Activated T-helper 2 cell treated with anti-CD3 and anti-CD28 coated beads, Interferon-gamma antibody, Interleukin-2, Interleukin-4, amounts not matched to agents 10 μg/mL and 5 μg/mL and 100 μg/mL, durations not matched to agents 14 hours and 24 hours and 36 hours (primary cell): ENCODE measurements at regions of chr22 and their contacts with region 1.

Region 1: DNA sequence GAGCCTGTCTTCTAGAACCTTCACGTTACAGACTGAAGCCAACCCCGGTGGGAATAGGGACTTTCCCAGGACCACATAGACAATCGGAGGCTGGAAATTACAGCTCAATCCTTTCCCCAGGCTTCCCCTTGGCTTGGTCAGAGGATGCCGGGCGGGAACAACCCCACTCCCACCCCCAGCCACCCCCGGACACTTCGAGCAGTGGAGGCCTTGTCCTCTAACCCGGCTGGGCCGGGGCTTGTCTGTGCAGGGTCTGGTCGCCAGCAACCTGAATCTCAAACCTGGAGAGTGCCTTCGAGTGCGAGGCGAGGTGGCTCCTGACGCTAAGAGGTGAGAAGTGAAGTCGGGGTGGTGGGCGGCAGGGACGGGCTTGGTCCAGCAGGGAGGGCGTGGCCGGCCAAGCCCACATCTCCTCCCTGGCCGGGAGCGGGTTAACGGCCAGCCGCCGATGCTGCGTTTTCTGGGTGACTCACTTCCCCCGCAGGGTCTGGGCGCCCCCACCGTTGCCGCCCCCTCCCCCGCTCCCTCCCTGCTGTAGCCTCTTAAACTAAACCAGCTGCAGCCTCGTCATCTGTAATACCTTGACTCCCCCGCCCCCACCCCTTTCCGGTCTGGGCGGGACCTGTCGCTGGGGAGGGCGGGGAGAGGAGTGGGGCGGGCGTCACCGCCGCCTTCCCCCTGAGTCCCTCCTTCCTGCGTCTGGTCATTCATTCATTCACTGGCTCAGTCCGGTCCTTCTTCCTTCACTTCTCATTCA is 1.5 kb downstream of the LGALS1 start:
- DNase-seq: peak; percentile 90
- H3K4me3 Mint-ChIP-seq: peak overlapping the region; percentile 95
- H3K27ac Mint-ChIP-seq: peak overlapping the region; percentile 97
- H3K4me1 Mint-ChIP-seq: peaks cover 45% of the 10 kb centered on the region
- H3K27me3 Mint-ChIP-seq: no peaks in the 10 kb centered on the region

Region 2: DNA sequence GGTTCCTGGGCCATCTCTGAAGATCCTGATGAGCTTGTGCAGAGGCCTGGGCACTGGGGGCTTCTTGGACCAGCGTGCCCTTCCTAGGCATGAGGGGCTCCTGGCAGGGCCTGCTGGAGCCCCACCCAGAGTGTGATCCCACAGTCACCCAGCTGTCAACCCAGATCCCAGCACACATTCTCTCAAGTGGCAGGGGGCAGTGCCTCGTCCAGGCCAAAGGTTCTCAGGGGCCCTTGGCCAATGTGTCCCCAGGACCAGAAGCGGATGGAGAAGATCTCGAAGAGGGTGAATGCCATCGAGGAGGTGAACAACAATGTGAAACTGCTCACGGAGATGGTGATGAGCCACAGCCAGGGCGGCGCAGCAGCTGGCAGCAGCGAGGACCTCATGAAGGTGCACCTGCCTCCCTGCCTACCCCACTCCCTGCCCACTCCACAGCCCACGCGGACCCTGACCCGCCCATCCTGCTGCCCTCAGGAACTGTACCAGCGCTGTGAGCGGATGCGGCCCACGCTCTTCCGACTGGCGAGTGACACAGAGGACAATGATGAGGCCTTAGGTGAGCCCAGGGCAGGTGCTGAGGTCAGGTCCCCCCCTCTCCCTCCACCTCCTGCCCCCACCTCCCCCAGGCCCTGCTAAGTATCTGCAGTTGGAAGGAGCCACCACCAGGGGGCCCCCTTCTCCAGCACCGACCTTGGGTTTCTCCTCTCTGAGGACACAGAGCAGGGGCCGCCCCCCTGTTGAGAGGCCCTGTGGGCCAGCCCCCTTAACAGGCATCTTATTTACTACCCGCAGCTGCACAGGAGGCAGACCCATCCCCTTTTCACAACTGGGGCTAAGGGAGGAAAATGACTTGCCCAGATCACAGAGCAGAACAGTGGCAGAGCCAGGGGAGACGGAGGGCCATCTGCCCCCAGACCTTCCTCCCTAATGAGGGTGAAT is 53.6 kb before region 1 on chr22:
- intact Hi-C with region 1: loop called (anchors 1 kb)
- DNase-seq: peak; percentile 67
- H3K4me3 Mint-ChIP-seq: no peak overlapping the region
- H3K27ac Mint-ChIP-seq: peak overlapping the region; percentile 70
- H3K4me1 Mint-ChIP-seq: peaks cover 20% of the 10 kb centered on the region
- H3K27me3 Mint-ChIP-seq: no peaks in the 10 kb centered on the region

Region 3: DNA sequence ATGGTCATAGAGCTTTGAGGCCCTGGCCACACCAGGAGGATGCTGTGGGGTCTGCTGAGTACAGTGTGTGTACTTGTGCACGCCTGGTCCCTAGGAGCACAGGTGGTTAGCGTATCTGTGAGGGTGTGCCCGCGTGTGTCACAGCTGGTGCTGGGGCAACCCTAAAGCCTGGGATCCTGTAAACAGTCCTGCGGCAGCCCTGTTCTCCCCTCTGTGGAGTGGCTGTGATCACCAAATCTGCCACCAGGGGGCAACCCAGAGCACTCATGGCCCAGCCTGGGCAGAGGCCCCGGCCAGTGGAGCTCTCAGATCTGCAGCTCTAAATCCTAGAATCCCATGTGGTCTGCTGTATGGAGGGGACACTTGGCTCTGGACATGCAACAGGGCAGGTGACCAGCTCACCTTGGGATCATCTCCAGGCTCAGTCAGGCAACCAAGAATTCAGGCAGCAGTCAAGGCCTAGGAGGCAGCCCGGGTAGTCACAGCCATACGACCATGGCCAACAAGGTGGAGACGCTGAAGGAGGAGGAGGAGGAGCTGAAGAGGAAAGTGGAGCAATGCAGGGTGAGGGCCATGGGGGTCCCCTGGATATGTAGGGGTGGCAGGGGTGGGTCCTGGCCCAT is 33.6 kb before region 1 on chr22:
- intact Hi-C with region 1: loop called (anchors 1 kb)
- DNase-seq: peak; percentile 79
- H3K4me3 Mint-ChIP-seq: peak overlapping the region; percentile 14
- H3K27ac Mint-ChIP-seq: peak overlapping the region; percentile 2
- H3K4me1 Mint-ChIP-seq: peaks cover 19% of the 10 kb centered on the region
- H3K27me3 Mint-ChIP-seq: no peaks in the 10 kb centered on the region

Region 4: DNA sequence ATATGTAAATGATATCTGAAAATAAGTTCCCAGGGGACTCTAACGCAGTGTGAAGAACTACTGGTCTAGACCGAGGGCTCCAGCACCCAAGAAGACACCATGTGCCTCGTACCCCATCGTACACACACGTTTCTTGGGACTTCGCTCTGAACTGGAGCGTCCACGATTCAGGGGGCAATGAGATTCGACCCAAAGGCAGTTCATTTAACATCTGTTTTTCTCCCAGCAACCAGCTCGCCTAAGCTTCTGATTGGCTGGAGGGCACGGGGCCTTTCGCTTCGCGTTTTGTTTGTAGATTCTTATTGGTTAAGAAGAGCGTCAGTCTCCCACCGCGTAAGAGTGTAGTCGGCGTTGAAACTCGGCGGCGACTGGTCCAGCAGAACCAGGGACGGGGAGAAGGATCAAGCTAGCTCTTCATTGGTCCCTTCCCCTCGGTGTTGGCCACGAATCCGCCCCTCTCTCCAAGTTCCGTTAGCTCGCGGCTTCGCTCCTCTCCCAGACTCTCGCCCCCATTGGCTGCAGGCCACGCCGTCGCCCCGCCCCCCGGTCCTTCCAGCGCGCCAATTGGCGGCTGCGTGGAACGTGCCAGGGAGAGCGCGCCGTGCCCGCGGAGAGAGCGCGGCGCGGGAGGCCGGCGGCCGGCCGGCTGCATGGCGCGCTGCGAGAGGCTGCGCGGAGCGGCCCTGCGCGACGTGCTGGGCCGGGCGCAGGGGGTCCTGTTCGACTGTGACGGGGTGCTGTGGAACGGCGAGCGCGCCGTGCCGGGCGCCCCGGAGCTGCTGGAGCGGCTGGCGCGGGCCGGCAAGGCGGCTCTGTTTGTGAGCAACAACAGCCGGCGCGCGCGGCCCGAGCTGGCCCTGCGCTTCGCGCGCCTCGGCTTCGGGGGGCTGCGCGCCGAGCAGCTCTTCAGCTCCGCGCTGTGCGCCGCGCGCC is 18.5 kb before region 1 on chr22 and contains the start of gene PDXP:
- intact Hi-C with region 1: loop called (anchors 1 kb)
- DNase-seq: peak; percentile 98
- H3K4me3 Mint-ChIP-seq: peak within 1 kb of the TSS; percentile 87
- H3K27ac Mint-ChIP-seq: peak within 1 kb of the TSS; percentile 89
- H3K4me1 Mint-ChIP-seq: peaks cover 29% of the 10 kb centered on the region
- H3K27me3 Mint-ChIP-seq: no peaks in the 10 kb centered on the region
- total RNA-seq, gene PDXP: 40.1 and 41.9 TPM in 2 replicates

Region 5: GRCh38 chr22:37690901-37691504 is 14.1 kb after region 1 on chr22:
- intact Hi-C with region 1: no loop called
- DNase-seq: no peak
- H3K4me3 Mint-ChIP-seq: no peak overlapping the region
- H3K27ac Mint-ChIP-seq: no peak overlapping the region
- H3K4me1 Mint-ChIP-seq: peaks cover 12% of the 10 kb centered on the region
- H3K27me3 Mint-ChIP-seq: no peaks in the 10 kb centered on the region

Region 6: GRCh38 chr22:37807410-37808293 is 130.7 kb after region 1 on chr22 and contains the start of gene GCAT:
- intact Hi-C with region 1: loop called (anchors 5 kb)
- DNase-seq: peak; percentile 88
- H3K4me3 Mint-ChIP-seq: peak within 1 kb of the TSS; percentile 77
- H3K27ac Mint-ChIP-seq: no peak within 1 kb of the TSS
- H3K4me1 Mint-ChIP-seq: peaks cover 36% of the 10 kb centered on the region
- H3K27me3 Mint-ChIP-seq: peaks cover 26% of the 10 kb centered on the region
- total RNA-seq, gene GCAT: 24.2 and 25.5 TPM in 2 replicates

Region 7: GRCh38 chr22:37849089-37849751 is 172.3 kb after region 1 on chr22 and contains the start of gene EIF3L:
- intact Hi-C with region 1: loop called (anchors 10 kb)
- DNase-seq: peak; percentile 89
- H3K4me3 Mint-ChIP-seq: peak within 1 kb of the TSS; percentile 94
- H3K27ac Mint-ChIP-seq: peak within 1 kb of the TSS; percentile 97
- H3K4me1 Mint-ChIP-seq: peaks cover 38% of the 10 kb centered on the region
- H3K27me3 Mint-ChIP-seq: no peaks in the 10 kb centered on the region
- total RNA-seq, gene EIF3L: 462 and 480 TPM in 2 replicates